Panc1 (cell line): ENCODE measurements at regions of chr3 and their contacts with region 1.

Region 1: DNA sequence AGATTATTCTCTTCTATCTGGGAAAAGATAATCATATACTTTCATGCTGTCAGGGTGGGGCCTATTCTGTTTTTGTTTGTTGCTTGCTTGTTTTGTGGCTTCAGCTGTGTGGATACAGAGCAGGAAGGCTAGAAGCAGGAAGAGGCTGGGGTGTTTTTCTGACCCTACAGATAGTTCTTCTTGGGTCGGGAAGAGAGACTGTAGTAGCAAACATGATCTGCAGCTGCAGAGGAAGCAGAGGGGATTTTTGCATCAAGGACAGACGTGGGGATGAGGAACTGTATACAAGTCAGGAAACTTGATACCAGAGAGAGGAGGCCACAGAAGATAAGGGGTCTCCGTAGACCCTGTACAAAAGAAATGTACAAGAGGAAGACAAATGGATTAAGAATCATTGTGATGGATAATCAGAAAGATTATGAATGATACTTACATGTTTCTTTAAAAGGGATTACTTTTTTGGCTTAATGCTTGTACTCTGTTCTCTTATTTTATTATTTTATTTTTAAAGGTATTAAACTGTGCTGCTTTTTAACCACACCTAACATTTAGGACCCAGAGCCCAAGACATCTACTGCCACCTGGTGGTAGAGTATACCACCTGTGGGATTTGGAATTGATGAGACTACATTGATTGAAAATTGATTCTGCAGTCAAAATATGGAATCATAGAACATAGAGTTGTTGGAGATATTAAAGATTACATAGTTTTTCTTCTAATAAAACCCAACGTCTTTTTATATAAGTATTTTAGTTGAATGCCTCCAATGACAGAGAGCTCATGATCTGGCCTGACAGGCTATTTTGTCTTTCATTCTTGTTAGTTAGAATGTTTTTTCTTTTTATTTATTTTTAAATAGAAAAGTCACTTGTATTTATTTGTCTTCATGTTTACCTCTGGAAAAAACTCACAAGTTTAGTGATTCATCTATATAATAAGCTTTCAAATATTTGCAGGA is 87.3 kb upstream of the ROPN1 start:
- DNase-seq: peak; percentile 17
- ATAC-seq: peak; percentile 74
- H3K4me3 ChIP-seq: no peak overlapping the region
- H3K27ac ChIP-seq: no peak overlapping the region
- H3K4me1 ChIP-seq: no peaks in the 10 kb centered on the region
- H3K27me3 ChIP-seq: peaks cover 24% of the 10 kb centered on the region
- CTCF ChIP-seq: peak; percentile 75; the same call in 1 of the 2 replicates

Region 2: GRCh38 chr3:124014366-124014942 is 64.8 kb before region 1 on chr3:
- CTCF ChIA-PET with region 1: no interaction called
- POLR2A ChIA-PET with region 1: no interaction called
- in situ Hi-C with region 1: no loop called
- intact Hi-C with region 1: loop called (anchors 1 kb)
- DNase-seq: no peak
- ATAC-seq: no peak
- H3K4me3 ChIP-seq: no peak overlapping the region
- H3K27ac ChIP-seq: no peak overlapping the region
- H3K4me1 ChIP-seq: no peaks in the 10 kb centered on the region
- H3K27me3 ChIP-seq: peaks cover 33% of the 10 kb centered on the region
- CTCF ChIP-seq: no peak